CD8-positive, alpha-beta memory T cell (primary cell): ENCODE measurements at regions of chr13 and their contacts with region 1.

Region 1: DNA sequence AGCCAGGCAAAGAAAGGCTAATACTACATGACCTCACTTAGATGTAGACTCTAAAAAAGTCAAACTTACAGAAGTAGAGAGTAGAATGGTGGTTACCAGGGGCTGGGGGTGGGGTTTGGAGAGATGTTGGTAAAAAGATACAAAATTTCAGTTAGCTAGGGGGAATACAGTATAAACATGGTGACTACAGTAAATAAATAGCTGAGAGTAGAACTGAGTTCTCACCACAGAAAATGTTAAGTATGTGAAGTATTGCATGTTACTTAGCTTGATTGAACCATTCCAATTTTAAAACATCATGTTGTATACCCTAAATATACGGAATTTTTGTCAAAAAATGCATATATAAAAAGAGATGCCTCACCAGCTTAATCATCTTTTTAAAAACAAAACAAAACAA is 67.5 kb upstream of the DOCK9 start:
- DNase-seq: no peak
- H3K4me3 ChIP-seq: no peak overlapping the region
- H3K4me3 Mint-ChIP-seq: peak overlapping the region; percentile 56 to 89 (median 80)
- H3K27ac ChIP-seq: no peak overlapping the region
- H3K27ac Mint-ChIP-seq: peak overlapping the region; percentile 88 to 97 (median 96)
- H3K4me1 ChIP-seq: peaks cover 95% of the 10 kb centered on the region
- H3K4me1 Mint-ChIP-seq: peaks cover 89 to 98% (median 96%) of the 10 kb centered on the region in 3 donors
- H3K27me3 ChIP-seq: no peaks in the 10 kb centered on the region
- H3K27me3 Mint-ChIP-seq: no peaks in the 10 kb centered on the region

Region 2: DNA sequence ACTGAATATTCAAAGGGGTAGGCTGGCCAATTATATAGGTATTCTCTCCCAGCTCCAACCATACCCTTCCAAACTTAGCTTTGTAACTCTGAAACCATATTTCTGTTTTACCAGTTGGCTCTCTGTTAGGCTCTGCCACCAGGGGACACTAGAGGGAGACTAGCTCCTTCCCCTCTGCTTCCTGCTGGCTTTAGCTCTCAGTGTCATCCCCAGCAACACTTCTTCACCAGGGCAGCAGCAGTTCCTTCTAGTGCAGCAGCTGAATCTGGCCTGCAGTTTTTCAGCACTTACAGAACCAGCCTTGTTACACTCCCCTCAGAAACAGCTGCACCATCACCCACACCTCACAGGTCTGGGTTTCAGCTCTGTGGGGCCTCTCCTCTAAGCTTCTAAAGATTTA is 16.5 kb before region 1 on chr13:
- CTCF ChIA-PET with region 1: interaction called, 13 read pairs
- POLR2A ChIA-PET with region 1: interaction called, 4 read pairs
- DNase-seq: peak; percentile 23 to 65 (median 34)
- H3K4me3 ChIP-seq: no peak overlapping the region
- H3K4me3 Mint-ChIP-seq: no peak overlapping the region
- H3K27ac ChIP-seq: no peak overlapping the region
- H3K27ac Mint-ChIP-seq: peak overlapping the region in 6 of 8 donors; percentile 2 to 82 (median 40)
- H3K4me1 ChIP-seq: peaks cover 37% of the 10 kb centered on the region
- H3K4me1 Mint-ChIP-seq: peaks cover 58 to 82% (median 73%) of the 10 kb centered on the region in 3 donors
- H3K27me3 ChIP-seq: no peaks in the 10 kb centered on the region
- H3K27me3 Mint-ChIP-seq: no peaks in the 10 kb centered on the region

Region 3: DNA sequence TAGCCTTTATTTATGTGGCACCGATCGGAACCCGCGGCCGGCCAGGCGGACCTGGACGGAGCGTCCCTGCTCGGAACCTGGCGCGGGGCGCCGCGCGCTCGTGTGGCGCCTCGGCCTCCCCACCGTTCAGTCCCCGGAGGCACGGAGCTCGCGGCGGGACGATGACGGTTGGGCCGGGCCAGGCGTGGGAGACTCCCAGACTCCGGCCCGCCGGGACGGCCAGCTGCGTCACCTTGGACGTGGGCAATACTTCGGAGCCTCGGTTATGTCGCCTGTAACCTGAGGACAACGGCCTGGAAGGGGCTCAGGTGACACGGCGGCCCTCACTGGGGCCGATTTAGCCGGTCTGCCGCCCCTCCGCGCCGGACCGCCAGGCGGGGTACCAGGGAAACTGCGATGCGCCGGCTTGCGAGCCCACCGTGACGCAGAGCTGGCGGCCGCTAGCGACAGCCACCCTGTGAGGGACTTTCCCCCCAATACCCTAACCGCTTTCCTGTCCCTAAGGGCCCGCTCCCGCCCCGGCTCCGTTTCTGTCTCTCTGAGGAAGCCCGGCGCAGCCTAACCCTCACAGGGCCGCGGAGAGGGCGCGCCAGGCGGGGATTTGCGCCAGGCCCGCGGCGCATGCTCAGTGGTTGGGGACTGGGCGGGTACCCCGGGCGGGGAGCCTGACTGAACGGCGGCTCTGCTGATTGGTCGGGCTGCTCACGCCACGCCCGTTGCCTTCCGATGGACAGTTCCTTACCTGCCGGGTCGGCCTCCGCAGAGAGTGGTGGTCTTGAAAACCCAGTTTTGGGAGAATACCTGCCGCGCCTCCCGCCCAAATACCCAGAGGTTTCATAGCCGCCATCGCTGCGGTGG is 41.9 kb after region 1 on chr13:
- CTCF ChIA-PET with region 1: interaction called, 12 read pairs
- POLR2A ChIA-PET with region 1: interaction called, 7 read pairs
- DNase-seq: peak; percentile 87 to 94 (median 91)
- H3K4me3 ChIP-seq: peak overlapping the region; percentile 92
- H3K4me3 Mint-ChIP-seq: peak overlapping the region; percentile 94 to 99 (median 99)
- H3K27ac ChIP-seq: peak overlapping the region; percentile 94
- H3K27ac Mint-ChIP-seq: peak overlapping the region; percentile 97 to 100 (median 99)
- H3K4me1 ChIP-seq: peaks cover 30% of the 10 kb centered on the region
- H3K4me1 Mint-ChIP-seq: peaks cover 32 to 42% (median 41%) of the 10 kb centered on the region in 3 donors
- H3K27me3 ChIP-seq: no peaks in the 10 kb centered on the region
- H3K27me3 Mint-ChIP-seq: peaks cover 0 to 3% of the 10 kb centered on the region in 2 donors